ENCODE measurements at regions of chr20 and their contacts with region 1.

Region 1: GRCh38 chr20:13325033-13325432 is 104.0 kb downstream of the ISM1 start:
- DNase-seq: no peak
- CTCF ChIP-seq: peak; percentile 50

Region 2: GRCh38 chr20:11646359-11646758 is 1678.7 kb before region 1 on chr20:
- in situ Hi-C with region 1: no loop called
- DNase-seq: no peak
- CTCF ChIP-seq: no peak

Region 3: DNA sequence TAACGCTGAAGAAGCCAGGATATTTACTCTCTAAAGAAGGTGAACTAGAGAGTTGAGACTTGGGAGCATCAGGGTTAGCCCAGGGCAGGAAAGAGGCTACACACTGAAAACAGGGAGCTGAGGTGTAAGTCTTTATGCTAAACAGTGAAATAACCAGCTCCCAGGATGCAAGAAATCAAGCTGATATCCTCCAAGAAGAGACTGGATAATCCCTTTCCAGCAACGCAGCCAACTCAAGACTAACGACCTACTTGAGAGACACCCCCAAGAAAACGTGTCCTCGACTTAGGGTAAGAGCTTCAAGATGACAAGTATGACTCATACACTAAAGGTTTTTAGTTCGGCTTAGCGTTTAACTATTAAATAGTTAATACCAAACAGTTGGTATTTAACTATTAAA is 111.5 kb after region 1 on chr20:
- in situ Hi-C with region 1: no loop called
- DNase-seq: no peak
- CTCF ChIP-seq: no peak

Region 4: DNA sequence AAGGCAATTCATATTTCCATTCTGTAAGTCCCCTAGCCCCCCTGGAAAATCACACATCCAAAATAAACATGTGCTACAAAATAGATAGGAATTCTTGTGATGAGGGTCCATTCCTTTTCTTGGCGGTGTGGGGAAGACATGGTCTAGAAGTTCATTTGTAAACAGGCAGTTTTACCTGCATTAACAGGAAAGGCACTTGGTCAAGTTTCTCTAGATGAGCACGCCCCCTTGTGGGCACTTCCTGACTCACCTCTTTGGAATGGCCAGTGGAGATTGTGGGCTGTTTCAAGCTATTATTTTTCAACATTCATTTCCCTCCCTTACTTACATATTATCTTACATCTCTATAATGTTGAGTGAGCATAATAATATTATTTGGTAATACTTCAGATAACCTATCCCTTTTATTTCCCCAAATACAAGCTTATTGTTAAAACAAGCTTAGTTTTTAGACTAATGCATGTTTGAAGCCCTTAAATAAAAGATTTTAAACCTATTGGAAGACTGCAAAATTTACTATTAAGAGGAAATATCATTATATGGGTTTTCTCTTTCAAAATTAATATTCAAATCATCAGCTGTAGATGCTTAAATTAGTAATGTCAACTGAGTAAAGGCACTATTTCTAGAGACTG is 221.6 kb after region 1 on chr20:
- in situ Hi-C with region 1: loop called (anchors 10 kb)
- DNase-seq: peak; percentile 27
- CTCF ChIP-seq: peak; percentile 79

Region 5: DNA sequence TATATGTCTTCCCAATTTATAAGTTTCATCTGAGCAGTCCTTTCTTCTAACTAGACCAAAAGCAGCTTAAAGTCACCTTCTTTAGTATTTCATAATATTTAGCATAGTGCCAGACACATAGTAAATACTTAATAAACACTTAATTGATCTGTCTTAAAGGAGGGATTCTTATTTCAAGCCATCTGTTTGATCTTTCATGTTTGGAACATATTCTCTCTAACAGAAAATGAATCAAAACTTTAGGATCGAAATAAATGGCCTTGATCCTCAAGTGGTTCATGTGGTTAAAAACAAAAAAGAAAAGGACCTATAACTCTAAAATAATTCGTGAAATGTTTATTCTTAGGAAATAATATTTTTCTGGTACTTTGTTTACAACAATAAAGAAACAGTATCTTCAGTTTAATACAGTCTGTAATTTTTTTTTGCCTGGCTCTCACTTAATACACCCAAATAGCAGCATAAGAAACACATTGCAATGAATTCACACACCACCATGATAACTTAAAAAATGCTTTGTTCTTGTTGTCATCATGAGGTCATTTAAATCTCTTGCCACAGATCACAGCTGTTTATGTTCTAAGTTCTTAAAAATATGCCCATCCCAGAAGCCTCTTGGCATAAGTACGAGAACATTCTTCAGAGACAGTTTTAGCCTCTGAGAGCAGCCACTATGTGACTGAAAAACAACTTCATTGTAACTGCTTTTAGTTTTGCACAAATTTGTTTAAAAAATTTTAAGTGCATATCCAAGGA is 411.6 kb after region 1 on chr20:
- in situ Hi-C with region 1: no loop called
- DNase-seq: no peak
- CTCF ChIP-seq: no peak

Region 6: GRCh38 chr20:14644306-14645097 is 1319.5 kb after region 1 on chr20:
- in situ Hi-C with region 1: no loop called
- DNase-seq: no peak
- CTCF ChIP-seq: no peak